ENCODE measurements at regions of chr14 and their contacts with region 1.

Region 1: DNA sequence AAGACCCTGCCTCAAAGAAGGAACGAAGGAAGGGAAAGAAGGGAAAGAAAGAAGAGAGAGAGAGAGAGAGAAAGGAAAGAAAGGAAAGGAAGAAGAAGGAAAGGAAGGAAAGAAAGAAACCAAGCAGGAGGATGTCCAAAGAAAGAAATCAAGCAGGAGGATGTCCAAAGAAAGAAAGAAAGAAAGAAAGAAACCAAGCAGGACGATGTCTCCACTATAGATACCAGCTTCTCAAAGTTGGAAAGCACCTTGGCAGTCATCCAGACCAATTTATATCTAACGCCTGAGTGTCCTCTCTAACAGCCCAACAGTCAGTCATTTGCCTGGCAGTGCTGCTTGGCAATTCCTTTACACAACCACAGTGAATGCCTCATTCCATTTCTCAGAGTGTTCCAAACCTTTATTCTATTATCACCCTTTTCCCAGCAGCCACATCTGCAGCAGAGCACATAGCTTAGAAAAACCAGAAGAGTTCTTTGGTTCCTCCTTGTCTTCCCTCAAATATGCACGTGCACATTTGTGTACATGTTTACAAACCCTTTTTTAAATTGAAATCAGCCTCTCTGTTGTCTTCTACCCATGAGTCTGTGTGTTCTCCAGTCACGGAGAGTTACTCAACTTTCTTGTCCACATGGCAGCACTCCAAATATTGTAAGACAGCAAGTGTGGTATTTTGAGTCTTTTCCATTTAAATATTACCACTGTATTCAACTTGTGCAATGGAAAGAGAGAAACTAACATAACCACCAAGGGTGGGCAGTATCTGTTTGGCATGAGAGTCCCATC is 138.4 kb downstream of the STXBP6 start:
- DNase-seq: no peak
- H3K4me3 Mint-ChIP-seq: no peak overlapping the region
- H3K27ac Mint-ChIP-seq: peak overlapping the region; percentile 1
- H3K4me1 Mint-ChIP-seq: peaks cover 35% of the 10 kb centered on the region
- H3K27me3 Mint-ChIP-seq: no peaks in the 10 kb centered on the region
- CTCF ChIP-seq: no peak

Region 2: DNA sequence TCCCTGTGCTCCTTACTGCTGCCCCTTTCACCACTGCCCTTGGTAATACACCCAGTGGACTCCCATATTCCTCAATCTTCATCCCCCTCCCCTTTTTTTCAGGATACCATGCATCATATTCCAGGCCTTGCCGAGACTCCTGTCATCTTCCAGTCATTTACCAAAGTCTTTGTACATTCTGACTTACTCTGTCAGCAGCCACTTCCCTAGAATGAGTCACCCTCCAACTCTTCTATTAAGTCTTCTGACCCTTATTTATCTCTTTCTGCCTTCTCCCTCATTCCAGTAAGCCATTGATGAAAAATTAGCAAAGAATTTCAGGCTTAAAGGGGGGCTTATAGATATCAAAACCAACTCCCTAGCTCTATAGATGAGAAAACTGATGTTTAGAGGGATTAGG is 10.4 kb after region 1 on chr14:
- CTCF ChIA-PET with region 1: no interaction called
- intact Hi-C with region 1: loop called (anchors 1 kb)
- DNase-seq: no peak
- H3K4me3 Mint-ChIP-seq: no peak overlapping the region
- H3K27ac Mint-ChIP-seq: no peak overlapping the region
- H3K4me1 Mint-ChIP-seq: peaks cover 14% of the 10 kb centered on the region
- H3K27me3 Mint-ChIP-seq: no peaks in the 10 kb centered on the region
- CTCF ChIP-seq: no peak